Activated CD8-positive, alpha-beta T cell treated with anti-CD3 and anti-CD28 coated beads, Interleukin-2, amount 10 ng/mL, durations not matched to agents 7 days and 5 days (primary cell): ENCODE measurements at regions of chr2 and their contacts with region 1.

Region 1: GRCh38 chr2:26745609-26746327 is 18.3 kb upstream of the SLC35F6 start:
- DNase-seq: peak; percentile 88
- ATAC-seq: peak; percentile 54
- H3K4me3 Mint-ChIP-seq: no peak overlapping the region
- H3K27ac Mint-ChIP-seq: no peak overlapping the region
- H3K4me1 Mint-ChIP-seq: peaks cover 12% of the 10 kb centered on the region
- H3K27me3 Mint-ChIP-seq: no peaks in the 10 kb centered on the region

Region 2: GRCh38 chr2:26598336-26598995 is 147.3 kb before region 1 on chr2:
- CTCF ChIA-PET with region 1: interaction called, 151 read pairs
- POLR2A ChIA-PET with region 1: no interaction called
- DNase-seq: no peak
- ATAC-seq: no peak
- H3K4me3 Mint-ChIP-seq: no peak overlapping the region
- H3K27ac Mint-ChIP-seq: no peak overlapping the region
- H3K4me1 Mint-ChIP-seq: peaks cover 6% of the 10 kb centered on the region
- H3K27me3 Mint-ChIP-seq: peaks cover 28% of the 10 kb centered on the region

Region 3: GRCh38 chr2:26840937-26841613 is 95.3 kb after region 1 on chr2:
- CTCF ChIA-PET with region 1: no interaction called
- POLR2A ChIA-PET with region 1: no interaction called
- DNase-seq: peak; percentile 21
- ATAC-seq: no peak
- H3K4me3 Mint-ChIP-seq: no peak overlapping the region
- H3K27ac Mint-ChIP-seq: no peak overlapping the region
- H3K4me1 Mint-ChIP-seq: no peaks in the 10 kb centered on the region
- H3K27me3 Mint-ChIP-seq: peaks cover 37% of the 10 kb centered on the region